MCF 10A (cell line): ENCODE measurements at regions of chr19 and their contacts with region 1.

Region 1: GRCh38 chr19:55467236-55468053 is 2.9 kb upstream of the C19orf85 start:
- DNase-seq: peak; percentile 65
- H3K4me3 Mint-ChIP-seq: no peak overlapping the region
- H3K27ac Mint-ChIP-seq: no peak overlapping the region
- H3K4me1 Mint-ChIP-seq: peaks cover 2% of the 10 kb centered on the region
- H3K27me3 Mint-ChIP-seq: no peaks in the 10 kb centered on the region
- CTCF ChIP-seq: peak; percentile 98

Region 2: DNA sequence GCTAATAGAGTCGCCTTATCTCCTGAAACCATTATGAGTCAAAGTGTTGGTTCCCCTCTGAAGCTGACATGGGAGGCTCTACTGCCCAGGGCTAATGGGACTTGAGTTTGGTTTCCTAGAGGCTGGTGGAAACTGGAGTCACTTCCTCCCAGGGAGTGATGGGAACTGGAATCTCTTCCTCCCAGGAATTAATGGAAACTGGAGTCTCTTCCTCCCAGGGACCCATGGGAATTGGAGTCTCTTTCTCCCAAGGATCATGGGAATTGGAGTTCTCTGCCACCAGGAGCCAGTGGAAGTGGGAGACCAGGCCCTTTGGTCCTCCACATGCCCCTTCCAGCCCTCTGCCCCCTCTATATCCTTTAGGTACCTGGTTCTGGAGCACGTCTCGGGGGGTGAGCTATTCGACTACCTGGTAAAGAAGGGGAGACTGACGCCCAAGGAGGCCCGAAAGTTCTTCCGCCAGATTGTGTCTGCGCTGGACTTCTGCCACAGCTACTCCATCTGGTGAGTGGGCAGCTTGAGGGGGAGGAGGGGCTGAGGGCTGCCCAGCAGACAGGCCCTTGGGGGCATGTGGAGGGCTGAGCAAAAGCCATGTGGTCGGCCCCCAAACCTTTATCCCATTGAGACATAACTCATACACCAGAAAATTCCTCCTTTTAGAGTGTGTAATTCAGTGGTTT is 178.2 kb before region 1 on chr19:
- CTCF ChIA-PET with region 1: interaction called, 11 read pairs
- POLR2A ChIA-PET with region 1: no interaction called
- intact Hi-C with region 1: no loop called
- DNase-seq: no peak
- H3K4me3 Mint-ChIP-seq: no peak overlapping the region
- H3K27ac Mint-ChIP-seq: no peak overlapping the region
- H3K4me1 Mint-ChIP-seq: peaks cover 5% of the 10 kb centered on the region
- H3K27me3 Mint-ChIP-seq: no peaks in the 10 kb centered on the region
- CTCF ChIP-seq: no peak

Region 3: GRCh38 chr19:55484593-55485438 is 17.4 kb after region 1 on chr19 and contains the start of gene NAT14:
- CTCF ChIA-PET with region 1: interaction called, 20 read pairs
- POLR2A ChIA-PET with region 1: interaction called, 4 read pairs
- intact Hi-C with region 1: no loop called
- DNase-seq: peak; percentile 50
- H3K4me3 Mint-ChIP-seq: peak within 1 kb of the TSS; percentile 69
- H3K27ac Mint-ChIP-seq: peak within 1 kb of the TSS; percentile 87
- H3K4me1 Mint-ChIP-seq: peaks cover 17% of the 10 kb centered on the region
- H3K27me3 Mint-ChIP-seq: no peaks in the 10 kb centered on the region
- CTCF ChIP-seq: no peak
- total RNA-seq, gene NAT14: 16.6 and 22.8 TPM in 2 replicates

Region 4: DNA sequence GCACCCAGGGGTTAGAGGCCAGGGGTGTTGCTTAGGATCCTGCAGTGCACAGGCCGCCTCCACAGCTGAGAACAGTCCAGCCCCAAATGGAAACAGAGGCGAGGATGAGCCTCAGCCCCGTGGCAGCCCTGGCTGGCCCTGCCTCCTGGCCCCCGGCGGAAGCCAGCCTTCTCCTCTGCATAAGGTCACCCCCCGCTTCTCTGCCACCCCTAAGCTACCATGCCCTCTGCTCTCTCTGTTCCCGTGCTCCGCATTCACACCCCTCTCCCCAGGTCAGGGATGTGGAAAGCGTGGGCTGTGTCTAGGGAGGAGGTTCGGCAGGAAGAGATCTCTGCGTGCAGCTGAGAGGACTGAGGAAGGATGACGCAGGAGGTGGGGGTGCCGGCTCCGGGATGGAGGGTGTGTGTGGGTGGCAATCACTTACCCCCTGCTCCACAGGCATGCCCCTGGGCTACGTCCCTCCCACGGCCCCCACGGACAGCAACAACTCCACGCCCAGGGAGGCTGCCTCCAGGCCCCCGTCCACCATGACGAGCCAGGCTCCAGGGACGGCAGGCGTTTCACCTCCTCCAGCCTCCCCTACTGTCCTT is 26.8 kb after region 1 on chr19:
- CTCF ChIA-PET with region 1: interaction called, 26 read pairs
- POLR2A ChIA-PET with region 1: no interaction called
- intact Hi-C with region 1: no loop called
- DNase-seq: peak; percentile 19
- H3K4me3 Mint-ChIP-seq: no peak overlapping the region
- H3K27ac Mint-ChIP-seq: no peak overlapping the region
- H3K4me1 Mint-ChIP-seq: peaks cover 17% of the 10 kb centered on the region
- H3K27me3 Mint-ChIP-seq: no peaks in the 10 kb centered on the region
- CTCF ChIP-seq: no peak

Region 5: GRCh38 chr19:55516878-55517620 is 49.6 kb after region 1 on chr19:
- CTCF ChIA-PET with region 1: interaction called, 13 read pairs
- POLR2A ChIA-PET with region 1: no interaction called
- intact Hi-C with region 1: no loop called
- DNase-seq: peak; percentile 94
- H3K4me3 Mint-ChIP-seq: peak overlapping the region; percentile 73
- H3K27ac Mint-ChIP-seq: peak overlapping the region; percentile 74
- H3K4me1 Mint-ChIP-seq: peaks cover 5% of the 10 kb centered on the region
- H3K27me3 Mint-ChIP-seq: peaks cover 11% of the 10 kb centered on the region
- CTCF ChIP-seq: peak; percentile 79

Region 6: GRCh38 chr19:56170261-56170660 is 702.8 kb after region 1 on chr19:
- CTCF ChIA-PET with region 1: no interaction called
- POLR2A ChIA-PET with region 1: no interaction called
- intact Hi-C with region 1: no loop called
- DNase-seq: peak; percentile 93
- H3K4me3 Mint-ChIP-seq: peak overlapping the region; percentile 0
- H3K27ac Mint-ChIP-seq: no peak overlapping the region
- H3K4me1 Mint-ChIP-seq: peaks cover 7% of the 10 kb centered on the region
- H3K27me3 Mint-ChIP-seq: no peaks in the 10 kb centered on the region
- CTCF ChIP-seq: no peak